PC-3 (cell line): ENCODE measurements at regions of chr9 and their contacts with region 1.

Region 1: DNA sequence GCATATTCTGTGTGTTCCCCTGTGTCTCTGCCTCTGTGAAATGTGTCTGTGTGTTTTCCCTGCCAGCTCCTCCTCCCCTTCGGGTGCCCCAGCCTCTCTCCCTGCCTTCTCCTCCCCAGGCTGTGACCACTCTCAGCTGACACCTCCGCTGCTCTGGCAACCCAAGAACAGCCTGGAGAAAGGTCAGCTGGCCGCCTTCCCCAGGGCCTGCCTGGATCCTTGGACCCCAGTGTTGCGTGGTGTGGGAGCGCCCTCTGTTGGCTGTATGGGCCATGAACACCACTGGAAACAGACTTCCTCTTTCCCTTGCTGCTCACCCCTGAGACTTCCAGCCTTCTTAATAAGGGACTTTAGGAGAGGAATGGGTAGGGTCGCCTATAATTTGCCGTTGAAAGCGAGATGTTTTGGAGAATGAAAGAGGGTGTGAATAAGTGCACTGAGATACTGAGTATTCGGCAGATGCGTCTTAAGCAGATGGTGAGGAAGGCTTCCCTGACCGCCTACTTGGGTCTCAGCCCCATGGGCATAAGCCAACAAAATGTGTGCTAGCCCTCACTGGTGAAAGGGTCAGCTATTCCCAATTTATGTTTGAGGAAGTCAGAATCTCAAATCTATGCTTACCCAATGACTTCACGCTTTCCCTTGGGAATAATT is 114.9 kb upstream of the TRIM32 start:
- DNase-seq: peak; percentile 59
- ATAC-seq: peak; percentile 85
- H3K4me3 ChIP-seq: no peak overlapping the region
- H3K27ac ChIP-seq: no peak overlapping the region
- H3K4me1 ChIP-seq: peaks cover 2% of the 10 kb centered on the region
- H3K27me3 ChIP-seq: no peaks in the 10 kb centered on the region
- CTCF ChIP-seq: peak; percentile 87

Region 2: DNA sequence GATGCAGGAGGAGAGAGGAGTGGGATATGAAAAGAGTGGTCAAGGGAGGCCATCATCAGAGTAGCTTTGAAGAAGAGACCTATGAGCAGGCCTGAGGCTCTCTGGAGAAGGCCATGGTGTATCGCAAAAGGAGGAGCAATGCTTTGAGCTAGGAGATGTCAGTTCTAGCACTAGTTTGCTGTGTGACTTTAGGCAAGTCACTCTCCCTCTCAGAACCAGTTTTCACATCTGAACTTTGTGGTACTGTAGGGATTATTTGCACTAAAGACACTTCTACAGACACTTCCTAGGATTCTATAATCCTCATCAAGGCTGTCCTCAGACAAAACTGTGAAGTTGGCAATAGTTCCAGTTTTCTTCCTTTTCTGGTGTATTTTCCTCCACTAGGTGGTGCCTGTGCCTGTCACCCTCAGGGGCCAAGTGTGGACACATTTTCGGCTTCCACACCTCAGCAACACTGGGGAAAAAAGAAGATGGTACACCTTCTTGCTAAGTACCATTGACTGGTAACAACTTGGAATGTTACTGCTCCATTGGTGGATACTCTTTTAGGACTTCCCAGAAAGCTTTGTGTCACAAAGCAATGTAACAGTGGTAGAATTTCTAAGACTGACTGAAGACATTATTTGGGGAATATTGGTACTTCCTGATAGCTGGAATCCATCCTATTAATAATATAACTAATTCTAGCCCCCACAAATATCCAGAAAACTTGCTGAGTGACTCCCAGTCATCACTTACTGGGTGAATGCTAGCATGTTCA is 408.7 kb before region 1 on chr9:
- CTCF ChIA-PET with region 1: interaction called, 3 read pairs
- POLR2A ChIA-PET with region 1: no interaction called
- intact Hi-C with region 1: loop called (anchors 5 kb)
- DNase-seq: peak; percentile 49
- ATAC-seq: no peak
- H3K4me3 ChIP-seq: no peak overlapping the region
- H3K27ac ChIP-seq: no peak overlapping the region
- H3K4me1 ChIP-seq: no peaks in the 10 kb centered on the region
- H3K27me3 ChIP-seq: no peaks in the 10 kb centered on the region
- CTCF ChIP-seq: peak; percentile 61

Region 3: GRCh38 chr9:116494815-116495634 is 77.2 kb before region 1 on chr9:
- CTCF ChIA-PET with region 1: no interaction called
- POLR2A ChIA-PET with region 1: no interaction called
- intact Hi-C with region 1: loop called (anchors 5 kb)
- DNase-seq: peak; percentile 46
- ATAC-seq: peak; percentile 28; the same call in 1 of the 2 replicates
- H3K4me3 ChIP-seq: no peak overlapping the region
- H3K27ac ChIP-seq: no peak overlapping the region
- H3K4me1 ChIP-seq: no peaks in the 10 kb centered on the region
- H3K27me3 ChIP-seq: no peaks in the 10 kb centered on the region
- CTCF ChIP-seq: peak; percentile 69

Region 4: DNA sequence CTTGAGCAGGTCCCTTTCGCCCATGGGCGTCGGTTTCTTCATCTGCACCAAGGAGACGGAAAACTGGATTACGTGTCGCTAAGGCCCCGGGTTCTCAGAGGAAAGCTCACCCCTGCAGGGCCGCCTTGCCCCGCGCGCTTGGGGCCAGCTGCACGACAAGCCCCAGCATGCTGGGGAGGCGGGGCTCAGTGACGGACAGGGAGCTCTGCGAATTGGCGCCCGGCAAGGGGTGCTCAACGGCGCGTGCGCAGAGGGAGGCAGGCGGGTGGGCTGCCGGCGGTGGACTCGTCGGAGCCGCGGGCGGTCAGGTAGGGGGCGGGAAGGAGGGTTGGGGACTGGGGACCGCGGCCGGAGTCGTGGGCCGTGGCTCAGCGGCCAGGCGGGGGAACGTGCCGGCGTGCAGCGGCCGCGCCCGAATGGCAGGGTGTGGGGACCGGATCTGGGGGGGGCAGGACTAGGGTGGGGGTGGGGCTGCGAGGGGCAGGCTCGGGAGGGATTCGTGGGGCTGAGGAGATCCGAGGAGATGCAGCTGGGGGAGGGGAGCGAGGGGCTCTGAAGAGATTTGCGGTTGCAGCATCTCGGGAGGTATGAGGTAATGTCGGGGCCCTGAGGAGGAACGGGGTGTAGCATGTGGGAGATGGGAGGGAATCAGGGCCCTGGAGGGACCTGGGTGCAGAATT is 115.0 kb after region 1 on chr9 and contains the start of gene TRIM32:
- CTCF ChIA-PET with region 1: no interaction called
- POLR2A ChIA-PET with region 1: no interaction called
- intact Hi-C with region 1: no loop called
- DNase-seq: peak; percentile 79
- ATAC-seq: peak; percentile 96
- H3K4me3 ChIP-seq: peak within 1 kb of the TSS; percentile 89
- H3K27ac ChIP-seq: no peak within 1 kb of the TSS
- H3K4me1 ChIP-seq: peaks cover 31% of the 10 kb centered on the region; the same call in 1 of the 2 replicates
- H3K27me3 ChIP-seq: no peaks in the 10 kb centered on the region
- CTCF ChIP-seq: no peak
- total RNA-seq, gene TRIM32: 8.1 and 11.6 TPM in 2 replicates